HEK293 (cell line): ENCODE measurements at regions of chr16 and their contacts with region 1.

Region 1: DNA sequence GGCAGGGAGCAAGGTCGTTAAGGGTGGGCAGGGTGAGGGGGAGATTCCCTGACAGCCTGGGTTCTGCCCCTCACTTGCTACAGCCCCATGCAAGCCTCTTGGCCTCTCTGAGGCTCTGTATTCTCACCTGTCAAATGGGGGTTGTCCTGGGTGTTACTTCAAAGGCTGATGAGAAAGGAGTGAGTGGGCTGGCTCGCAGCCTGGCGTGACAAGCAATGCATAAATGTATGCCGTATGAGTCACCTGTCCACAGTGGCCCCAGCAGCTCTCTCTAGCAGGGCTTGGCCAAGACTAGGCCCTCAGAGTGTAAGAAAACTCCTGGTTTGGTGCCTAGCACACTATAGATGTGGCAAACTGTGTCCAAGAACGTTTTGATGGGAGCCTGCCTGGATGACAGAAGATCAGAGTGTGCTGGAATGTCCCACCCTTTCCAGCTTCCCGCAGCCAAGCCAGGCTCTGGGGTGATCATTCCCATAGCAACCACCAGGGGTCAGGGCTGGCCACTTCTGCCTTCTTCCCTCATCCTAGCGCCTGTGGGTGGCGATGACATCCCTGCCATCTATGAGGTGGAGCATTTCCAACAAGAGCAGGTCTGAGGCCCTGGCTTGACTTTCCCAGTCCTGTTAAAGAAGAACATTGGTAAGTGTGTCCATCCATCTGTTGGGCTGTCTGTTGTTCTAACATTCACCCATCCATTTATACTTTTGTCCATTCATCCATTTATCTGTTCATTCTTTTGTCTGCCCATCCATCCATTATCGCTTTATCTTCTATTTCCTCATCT is 37.2 kb upstream of the ADGRG1 start:
- H3K4me3 ChIP-seq: no peak overlapping the region
- H3K27ac ChIP-seq: no peak overlapping the region
- H3K4me1 ChIP-seq: no peaks in the 10 kb centered on the region
- CTCF ChIP-seq: peak; percentile 92

Region 2: GRCh38 chr16:57462209-57462977 is 128.9 kb before region 1 on chr16 and contains the start of gene POLR2C:
- CTCF ChIA-PET with region 1: no interaction called
- POLR2A ChIA-PET with region 1: no interaction called
- H3K4me3 ChIP-seq: peak within 1 kb of the TSS; percentile 83
- H3K27ac ChIP-seq: peak within 1 kb of the TSS; percentile 45
- H3K4me1 ChIP-seq: no peaks in the 10 kb centered on the region; the same call in 1 of the 2 replicates
- CTCF ChIP-seq: peak; percentile 97

Region 3: DNA sequence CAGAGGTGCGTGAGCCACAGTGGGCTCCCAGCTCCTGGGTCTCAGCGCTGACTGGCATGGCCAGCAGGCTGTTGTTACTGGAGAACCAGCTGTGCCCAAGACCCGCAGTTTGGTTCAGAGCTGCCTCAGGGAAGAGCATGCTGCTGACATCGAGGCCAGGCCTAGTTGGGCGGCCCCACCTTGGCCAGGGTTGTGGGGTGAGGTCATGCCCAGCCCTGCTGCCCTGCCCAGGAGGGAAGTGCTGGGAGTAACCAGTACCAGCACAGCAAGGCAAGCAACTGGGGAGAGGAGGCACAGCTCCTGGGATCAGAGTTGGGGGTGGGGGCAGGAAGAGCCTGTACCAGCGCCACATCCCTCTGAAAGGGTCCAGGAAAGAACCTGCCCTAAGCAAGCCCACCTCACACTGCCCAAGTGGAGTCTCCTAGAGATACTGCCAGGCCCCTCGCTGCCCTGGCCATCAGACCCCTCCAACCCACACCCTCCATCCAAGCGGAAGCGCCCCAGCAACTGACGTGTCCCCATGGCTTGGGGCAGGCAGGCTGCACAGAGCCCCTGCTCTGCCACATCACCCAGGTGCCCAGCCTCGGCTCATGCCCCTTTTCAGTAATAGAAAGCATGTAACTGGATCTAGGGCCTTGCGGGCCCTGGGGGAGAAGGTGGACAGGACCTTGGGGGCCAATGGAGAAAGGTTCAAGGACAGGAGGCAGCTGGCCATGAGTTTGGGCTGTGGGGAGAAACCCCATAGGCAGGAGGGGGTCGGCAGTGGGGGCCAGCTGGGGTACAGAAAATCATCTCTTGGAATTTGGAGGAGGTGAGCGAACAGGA is 106.0 kb before region 1 on chr16:
- CTCF ChIA-PET with region 1: no interaction called
- POLR2A ChIA-PET with region 1: interaction called, 12 read pairs
- H3K4me3 ChIP-seq: peak overlapping the region; percentile 65
- H3K27ac ChIP-seq: no peak overlapping the region
- H3K4me1 ChIP-seq: no peaks in the 10 kb centered on the region
- CTCF ChIP-seq: no peak